MCF 10A (cell line): ENCODE measurements at regions of chr1 and their contacts with region 1.

Region 1: DNA sequence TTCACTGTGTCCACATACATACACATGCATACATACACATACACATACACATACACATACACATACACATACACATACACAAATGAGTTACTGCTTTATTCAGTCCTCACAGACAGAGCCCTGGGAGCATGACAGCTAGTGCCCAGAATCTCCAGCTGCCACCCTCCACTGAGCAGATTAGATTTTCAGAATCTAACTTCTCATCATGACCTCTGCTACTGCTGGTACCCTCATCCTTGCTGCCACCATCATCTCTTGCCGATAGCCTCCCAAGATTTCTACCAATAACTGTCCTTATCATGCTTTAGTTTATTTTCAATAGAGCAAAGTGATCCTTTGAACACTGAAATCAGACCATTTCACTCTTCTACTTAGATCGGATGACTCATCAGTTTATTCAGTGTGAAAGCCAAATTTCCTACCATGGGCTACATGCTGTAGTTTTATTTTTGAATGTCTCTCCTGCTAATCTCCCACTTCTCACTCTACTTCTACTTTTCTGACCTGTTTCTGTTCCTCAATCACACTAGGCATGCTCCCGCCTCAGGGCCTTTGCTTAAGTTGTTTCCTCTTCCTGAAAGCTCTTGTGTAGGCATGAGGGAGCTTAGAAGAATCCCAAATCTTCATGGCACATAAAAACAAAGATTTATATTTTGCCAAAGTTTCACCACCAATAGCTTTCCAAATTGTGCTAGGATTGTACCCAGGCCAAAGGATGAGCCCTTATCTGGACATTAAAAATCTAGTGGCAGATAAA is 43.0 kb downstream of the ATP6V1G3 start:
- DNase-seq: peak; percentile 69
- H3K4me3 Mint-ChIP-seq: peak overlapping the region; percentile 5
- H3K27ac Mint-ChIP-seq: peak overlapping the region; percentile 40
- H3K4me1 Mint-ChIP-seq: peaks cover 43% of the 10 kb centered on the region
- H3K27me3 Mint-ChIP-seq: no peaks in the 10 kb centered on the region
- CTCF ChIP-seq: no peak

Region 2: GRCh38 chr1:198234520-198235251 is 262.8 kb before region 1 on chr1:
- CTCF ChIA-PET with region 1: no interaction called
- POLR2A ChIA-PET with region 1: no interaction called
- intact Hi-C with region 1: no loop called
- DNase-seq: peak; percentile 62
- H3K4me3 Mint-ChIP-seq: peak overlapping the region; percentile 70
- H3K27ac Mint-ChIP-seq: no peak overlapping the region
- H3K4me1 Mint-ChIP-seq: peaks cover 29% of the 10 kb centered on the region
- H3K27me3 Mint-ChIP-seq: no peaks in the 10 kb centered on the region
- CTCF ChIP-seq: no peak

Region 3: DNA sequence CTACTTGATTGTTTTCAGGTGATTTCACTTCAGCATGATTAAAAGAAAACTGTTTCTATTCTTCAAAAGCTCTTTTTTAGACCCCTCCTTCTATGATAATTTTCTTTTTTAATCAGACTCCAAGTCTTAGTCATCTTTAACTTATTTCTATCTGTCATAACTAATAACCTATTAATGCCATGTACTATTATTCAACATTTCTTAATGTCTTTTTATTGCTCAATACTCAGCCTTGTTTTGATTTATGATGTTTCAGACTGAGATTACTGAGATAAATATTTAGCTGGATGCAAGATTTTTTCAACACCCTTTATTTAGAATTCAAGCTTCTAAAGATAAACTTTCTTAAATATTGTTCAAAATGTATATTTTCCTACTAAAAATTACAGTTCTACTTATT is 10.6 kb before region 1 on chr1:
- CTCF ChIA-PET with region 1: interaction called, 4 read pairs
- POLR2A ChIA-PET with region 1: interaction called, 42 read pairs
- intact Hi-C with region 1: no loop called
- DNase-seq: no peak
- H3K4me3 Mint-ChIP-seq: no peak overlapping the region
- H3K27ac Mint-ChIP-seq: no peak overlapping the region
- H3K4me1 Mint-ChIP-seq: peaks cover 6% of the 10 kb centered on the region
- H3K27me3 Mint-ChIP-seq: no peaks in the 10 kb centered on the region
- CTCF ChIP-seq: no peak

Region 4: GRCh38 chr1:198560093-198560638 is 62.6 kb after region 1 on chr1:
- CTCF ChIA-PET with region 1: no interaction called
- POLR2A ChIA-PET with region 1: interaction called, 13 read pairs
- intact Hi-C with region 1: no loop called
- DNase-seq: peak; percentile 81
- H3K4me3 Mint-ChIP-seq: no peak overlapping the region
- H3K27ac Mint-ChIP-seq: no peak overlapping the region
- H3K4me1 Mint-ChIP-seq: peaks cover 19% of the 10 kb centered on the region
- H3K27me3 Mint-ChIP-seq: no peaks in the 10 kb centered on the region
- CTCF ChIP-seq: no peak

Region 5: GRCh38 chr1:198633675-198634121 is 136.2 kb after region 1 on chr1:
- CTCF ChIA-PET with region 1: no interaction called
- POLR2A ChIA-PET with region 1: no interaction called
- intact Hi-C with region 1: no loop called
- DNase-seq: no peak
- H3K4me3 Mint-ChIP-seq: no peak overlapping the region
- H3K27ac Mint-ChIP-seq: no peak overlapping the region
- H3K4me1 Mint-ChIP-seq: no peaks in the 10 kb centered on the region
- H3K27me3 Mint-ChIP-seq: no peaks in the 10 kb centered on the region
- CTCF ChIP-seq: no peak

Region 6: DNA sequence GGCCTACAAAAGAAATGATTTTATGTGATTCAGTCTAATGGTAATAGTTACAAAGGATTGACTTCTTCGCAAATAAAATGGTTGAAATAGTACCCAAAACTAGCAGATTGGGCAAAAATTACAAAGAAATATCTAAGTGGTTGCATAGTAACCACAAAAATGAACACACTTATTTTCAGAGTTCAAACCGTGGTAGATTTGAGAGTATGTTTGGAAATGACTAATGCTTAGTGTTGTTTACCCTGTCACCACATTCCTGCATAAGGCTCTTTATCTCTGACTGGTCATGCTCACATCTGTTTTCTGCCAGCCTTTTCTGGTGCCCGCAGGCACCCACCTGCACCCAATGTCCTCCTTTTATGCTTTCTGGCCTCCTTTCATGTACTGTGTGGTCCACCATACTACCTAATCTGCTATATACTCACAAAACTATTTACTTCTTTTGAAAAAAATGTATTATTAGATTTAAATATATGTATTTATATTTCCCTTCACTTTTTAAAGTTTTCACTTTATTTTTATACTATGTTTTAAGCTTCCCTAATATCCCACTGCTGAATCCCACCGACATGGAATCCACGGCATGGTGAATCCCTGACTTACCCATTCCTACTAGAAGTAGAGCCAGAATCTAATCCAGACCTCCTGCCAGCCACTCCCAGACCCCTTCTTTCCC is 171.6 kb after region 1 on chr1:
- CTCF ChIA-PET with region 1: interaction called, 5 read pairs
- POLR2A ChIA-PET with region 1: interaction called, 8 read pairs
- intact Hi-C with region 1: loop called (anchors 5 kb)
- DNase-seq: peak; percentile 92
- H3K4me3 Mint-ChIP-seq: no peak overlapping the region
- H3K27ac Mint-ChIP-seq: peak overlapping the region; percentile 95
- H3K4me1 Mint-ChIP-seq: peaks cover 49% of the 10 kb centered on the region
- H3K27me3 Mint-ChIP-seq: no peaks in the 10 kb centered on the region
- CTCF ChIP-seq: no peak